ENCODE measurements at regions of chr5 and their contacts with region 1.

Region 1: GRCh38 chr5:149367249-149367971 is 9.6 kb downstream of the PCYOX1L start:
- DNase-seq: peak in 4 of 5 donors; percentile 43 to 52 (median 48)
- H3K4me3 ChIP-seq: no peak overlapping the region
- H3K4me3 Mint-ChIP-seq: no peak overlapping the region
- H3K27ac ChIP-seq: no peak overlapping the region
- H3K27ac Mint-ChIP-seq: peak overlapping the region in 3 of 7 donors; percentile 28 to 62 (median 48)
- H3K4me1 ChIP-seq: peaks cover 12% of the 10 kb centered on the region
- H3K4me1 Mint-ChIP-seq: peaks cover 13 to 27% (median 25%) of the 10 kb centered on the region in 4 donors
- H3K27me3 ChIP-seq: no peaks in the 10 kb centered on the region
- H3K27me3 Mint-ChIP-seq: no peaks in the 10 kb centered on the region

Region 2: DNA sequence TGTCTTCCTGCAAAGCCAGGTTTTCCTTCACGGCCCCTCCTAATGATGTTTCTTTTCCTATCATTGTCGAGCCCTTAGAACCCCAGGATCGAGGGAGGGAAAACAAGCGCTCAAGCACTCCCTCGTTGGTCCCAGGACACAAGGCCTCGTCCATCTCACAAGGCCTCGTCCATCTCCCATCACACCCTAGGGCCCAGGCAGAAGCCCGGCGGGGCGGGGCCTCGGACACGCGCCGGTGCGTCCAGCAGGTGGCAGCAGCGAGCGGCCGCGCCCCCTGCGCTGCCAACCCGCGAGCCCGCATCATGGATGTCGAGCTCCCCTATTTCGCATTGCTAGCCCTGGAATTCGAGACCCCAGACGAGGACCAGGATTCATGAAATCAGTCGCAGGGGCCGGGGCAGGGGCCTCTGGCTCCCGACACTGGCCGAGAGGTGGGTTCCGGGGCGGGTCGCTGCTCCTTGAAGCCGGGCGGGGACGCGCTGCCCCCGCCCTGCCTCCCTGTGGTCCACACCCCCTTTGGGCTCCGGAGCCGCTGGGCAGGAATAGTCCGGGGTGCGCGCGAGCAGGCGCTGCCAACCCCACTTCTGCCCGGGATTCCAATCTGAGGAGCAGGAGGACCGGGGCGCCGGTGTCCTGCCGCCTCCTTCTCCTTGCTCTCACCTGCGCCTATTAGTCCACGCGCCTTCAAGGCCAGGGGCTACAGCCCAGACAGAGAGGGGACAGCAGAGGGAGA is 226.0 kb before region 1 on chr5 and contains the start of gene ABLIM3:
- CTCF ChIA-PET with region 1: interaction called, 7 read pairs
- POLR2A ChIA-PET with region 1: no interaction called
- intact Hi-C with region 1: loop called (anchors 2 kb)
- DNase-seq: peak; percentile 58 to 79 (median 68)
- H3K4me3 ChIP-seq: peak within 1 kb of the TSS in 1 of 2 donors; percentile 58
- H3K4me3 Mint-ChIP-seq: peak within 1 kb of the TSS; percentile 33 to 76 (median 56)
- H3K27ac ChIP-seq: no peak within 1 kb of the TSS
- H3K27ac Mint-ChIP-seq: peak within 1 kb of the TSS in 1 of 7 donors; percentile 36
- H3K4me1 ChIP-seq: peaks cover 10% of the 10 kb centered on the region
- H3K4me1 Mint-ChIP-seq: peaks cover 0 to 5% (median under 1%) of the 10 kb centered on the region in 4 donors
- H3K27me3 ChIP-seq: no peaks in the 10 kb centered on the region
- H3K27me3 Mint-ChIP-seq: peaks cover 4 to 18% of the 10 kb centered on the region in 2 donors
- total RNA-seq, gene ABLIM3: not detected

Region 3: DNA sequence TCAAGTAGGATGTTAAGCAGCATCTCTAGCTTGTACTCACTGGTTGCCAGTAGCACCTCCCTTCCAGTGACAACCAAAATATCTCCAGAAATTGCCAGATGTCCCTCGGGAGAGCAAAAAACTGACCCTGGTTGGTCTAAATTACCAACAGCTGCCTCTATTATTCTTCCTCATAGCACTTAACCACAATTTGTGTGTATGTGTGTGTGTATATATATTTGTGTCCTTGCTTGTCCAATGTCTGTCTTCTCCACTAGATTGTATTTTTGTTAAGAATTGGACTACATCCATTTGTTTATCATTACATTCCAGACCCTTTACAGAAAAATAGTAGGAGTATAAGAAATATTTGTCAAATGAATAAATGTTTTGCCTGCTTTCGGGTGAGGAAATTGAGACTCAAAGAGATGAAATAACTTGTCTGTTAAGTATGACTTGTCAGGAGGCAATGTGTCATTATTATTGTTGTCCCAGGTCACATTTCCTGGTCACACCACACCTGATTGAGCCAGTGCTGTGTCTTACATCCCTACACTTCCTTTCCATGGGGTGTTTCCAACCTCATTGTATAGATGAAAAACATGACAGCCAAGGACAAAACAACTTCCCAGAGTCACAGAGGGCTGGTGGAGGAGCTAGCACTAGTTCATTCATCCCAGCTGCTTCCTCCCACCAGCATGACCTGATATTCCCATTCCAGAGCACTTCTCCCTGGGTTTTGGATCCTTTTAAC is 33.5 kb before region 1 on chr5:
- CTCF ChIA-PET with region 1: interaction called, 41 read pairs
- POLR2A ChIA-PET with region 1: interaction called, 3 read pairs
- intact Hi-C with region 1: no loop called
- DNase-seq: no peak
- H3K4me3 ChIP-seq: no peak overlapping the region
- H3K4me3 Mint-ChIP-seq: no peak overlapping the region
- H3K27ac ChIP-seq: no peak overlapping the region
- H3K27ac Mint-ChIP-seq: peak overlapping the region in 1 of 7 donors; percentile 24
- H3K4me1 ChIP-seq: no peaks in the 10 kb centered on the region
- H3K4me1 Mint-ChIP-seq: peaks cover 0 to 3% (median 0%) of the 10 kb centered on the region in 4 donors
- H3K27me3 ChIP-seq: no peaks in the 10 kb centered on the region
- H3K27me3 Mint-ChIP-seq: no peaks in the 10 kb centered on the region

Region 4: DNA sequence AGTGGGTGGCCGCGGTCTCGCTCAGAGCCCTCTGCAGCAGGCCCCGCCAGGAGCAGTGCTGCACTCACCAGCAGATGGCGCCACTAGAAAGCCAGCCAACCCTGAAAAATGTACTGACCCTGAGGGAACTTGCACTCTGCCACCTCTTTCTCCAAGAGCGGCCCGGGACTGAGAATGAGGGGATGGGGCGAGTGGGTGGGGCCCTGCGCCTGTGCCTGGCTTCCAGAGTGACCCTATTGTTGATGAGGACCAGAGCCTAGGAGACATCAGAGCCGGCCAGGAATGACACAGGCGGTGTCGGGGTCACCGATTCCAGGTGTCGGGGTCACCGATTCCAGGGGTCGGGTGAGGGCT is 14.6 kb after region 1 on chr5:
- CTCF ChIA-PET with region 1: interaction called, 26 read pairs
- POLR2A ChIA-PET with region 1: interaction called, 3 read pairs
- intact Hi-C with region 1: no loop called
- DNase-seq: peak; percentile 50 to 56 (median 54)
- H3K4me3 ChIP-seq: no peak overlapping the region
- H3K4me3 Mint-ChIP-seq: no peak overlapping the region
- H3K27ac ChIP-seq: no peak overlapping the region
- H3K27ac Mint-ChIP-seq: peak overlapping the region in 3 of 7 donors; percentile 43 to 58 (median 53)
- H3K4me1 ChIP-seq: no peaks in the 10 kb centered on the region
- H3K4me1 Mint-ChIP-seq: peaks cover 0 to 4% (median 1%) of the 10 kb centered on the region in 4 donors
- H3K27me3 ChIP-seq: no peaks in the 10 kb centered on the region
- H3K27me3 Mint-ChIP-seq: peaks cover 3 to 4% of the 10 kb centered on the region in 2 donors

Region 5: DNA sequence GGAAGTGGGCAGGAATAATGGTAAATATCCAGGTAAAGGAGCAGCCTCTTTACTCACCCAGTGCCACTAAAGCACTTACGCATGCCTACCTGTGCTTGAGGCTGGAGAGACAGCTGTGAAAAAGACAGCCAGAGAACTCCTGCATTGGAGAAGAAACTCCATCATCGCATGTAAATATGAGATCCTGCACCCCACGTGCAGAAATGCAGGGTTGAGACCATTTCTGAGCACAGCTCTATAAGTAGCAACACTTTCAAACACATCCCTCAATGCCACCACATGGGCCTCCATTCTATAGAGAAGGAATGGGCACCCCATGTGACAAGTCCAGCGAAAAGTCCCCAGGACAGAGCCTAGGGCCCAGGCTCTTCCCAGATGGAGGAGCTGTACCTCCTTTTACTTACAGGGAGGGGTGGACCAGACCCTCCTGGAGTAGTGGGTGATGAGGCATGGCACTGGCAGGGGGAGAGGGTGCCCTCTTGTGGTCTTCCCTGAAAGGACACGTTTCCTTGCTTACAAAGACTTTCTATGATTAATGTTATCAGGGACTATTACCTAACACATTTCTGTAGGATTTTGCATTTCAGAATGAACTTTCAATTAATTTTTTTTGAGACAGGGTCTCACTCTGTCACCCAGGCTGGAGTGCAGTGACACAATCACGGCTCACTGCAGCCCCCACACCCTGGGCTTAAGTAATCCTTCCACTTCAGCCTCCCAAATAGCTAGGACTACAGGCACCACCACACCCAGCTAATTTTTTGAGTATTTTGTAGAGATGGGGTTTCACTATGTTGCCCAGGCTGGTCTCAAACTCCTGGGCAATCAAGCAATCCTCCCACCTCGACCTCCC is 67.0 kb after region 1 on chr5:
- CTCF ChIA-PET with region 1: interaction called, 7 read pairs
- POLR2A ChIA-PET with region 1: no interaction called
- intact Hi-C with region 1: loop called (anchors 5 kb)
- DNase-seq: peak in 4 of 5 donors; percentile 34 to 42 (median 38)
- H3K4me3 ChIP-seq: no peak overlapping the region
- H3K4me3 Mint-ChIP-seq: no peak overlapping the region
- H3K27ac ChIP-seq: no peak overlapping the region
- H3K27ac Mint-ChIP-seq: no peak overlapping the region
- H3K4me1 ChIP-seq: peaks cover 3% of the 10 kb centered on the region
- H3K4me1 Mint-ChIP-seq: peaks cover 0 to 11% (median 6%) of the 10 kb centered on the region in 4 donors
- H3K27me3 ChIP-seq: no peaks in the 10 kb centered on the region
- H3K27me3 Mint-ChIP-seq: no peaks in the 10 kb centered on the region

Region 6: DNA sequence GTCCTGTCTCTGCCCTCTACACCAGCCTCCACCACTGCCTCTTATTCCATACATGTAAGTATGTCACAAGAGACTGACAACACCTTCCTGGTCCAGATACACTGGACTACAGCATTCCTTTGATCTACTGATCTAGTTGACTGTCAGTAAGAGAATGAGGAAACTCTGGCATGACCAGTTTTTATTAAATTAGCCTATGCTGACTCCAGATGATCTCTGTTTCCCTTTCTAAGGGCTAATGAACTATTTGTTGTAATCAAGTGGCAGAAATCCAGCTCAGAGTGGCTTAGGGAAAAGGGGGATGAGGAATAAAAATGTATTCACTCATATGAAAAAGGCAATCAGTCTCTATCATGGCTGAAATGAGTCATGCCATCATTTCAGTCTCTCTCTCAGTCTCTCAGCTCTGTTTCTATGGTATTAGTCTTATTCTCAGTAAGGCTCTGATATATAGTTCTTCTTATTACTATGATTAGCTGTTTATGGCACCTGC is 219.4 kb after region 1 on chr5:
- CTCF ChIA-PET with region 1: no interaction called
- POLR2A ChIA-PET with region 1: no interaction called
- intact Hi-C with region 1: no loop called
- DNase-seq: no peak
- H3K4me3 ChIP-seq: no peak overlapping the region
- H3K4me3 Mint-ChIP-seq: peak overlapping the region in 1 of 8 donors; percentile 28
- H3K27ac ChIP-seq: no peak overlapping the region
- H3K27ac Mint-ChIP-seq: peak overlapping the region in 1 of 7 donors; percentile 57
- H3K4me1 ChIP-seq: no peaks in the 10 kb centered on the region
- H3K4me1 Mint-ChIP-seq: no peaks in the 10 kb centered on the region
- H3K27me3 ChIP-seq: no peaks in the 10 kb centered on the region
- H3K27me3 Mint-ChIP-seq: peaks cover 0 to under 1% of the 10 kb centered on the region in 2 donors